ENCODE measurements at regions of chr4 and their contacts with region 1.

Region 1: DNA sequence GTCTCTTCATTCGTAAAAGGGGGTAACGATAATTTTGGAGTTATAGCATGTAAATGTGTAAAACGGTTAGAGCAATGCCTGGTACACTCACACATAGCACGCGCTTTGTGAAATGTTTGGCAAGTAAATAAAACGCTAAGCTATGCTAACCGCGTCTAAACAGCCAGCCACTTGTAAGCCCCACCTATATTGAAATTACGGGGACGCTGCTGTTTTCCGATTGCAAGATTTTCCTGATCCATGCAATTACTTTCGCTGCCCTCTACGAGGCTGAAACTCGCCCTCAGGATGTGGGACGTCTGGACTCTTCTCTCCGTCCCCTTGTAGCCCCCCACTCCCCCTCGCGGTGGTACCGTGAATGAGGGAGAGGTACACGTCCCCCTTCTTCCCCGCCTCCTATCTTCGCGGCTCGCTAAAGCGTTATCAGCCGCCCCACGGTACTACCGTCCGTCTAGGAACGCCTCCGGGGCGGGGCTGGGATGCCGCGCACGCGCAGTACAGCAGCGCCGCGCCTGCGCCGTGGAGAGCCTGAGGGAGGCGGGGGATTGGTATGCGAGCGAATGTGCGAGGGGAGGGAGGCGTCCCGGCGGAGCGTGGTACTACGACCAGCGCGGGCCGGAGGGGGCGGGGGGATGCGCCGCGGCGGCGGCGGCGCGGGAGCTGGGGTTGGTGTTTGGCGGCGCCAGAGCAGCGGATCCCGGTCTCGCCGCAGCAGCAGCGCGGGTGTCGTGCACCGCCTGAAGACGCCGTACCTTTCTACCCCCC is at the start of gene STIM2:
- DNase-seq: peak; percentile 100
- ATAC-seq: peak; percentile 67
- H3K4me3 Mint-ChIP-seq: peak within 1 kb of the TSS; percentile 100
- H3K27ac Mint-ChIP-seq: peak within 1 kb of the TSS; percentile 100
- H3K4me1 Mint-ChIP-seq: peaks cover 63% of the 10 kb centered on the region
- H3K27me3 Mint-ChIP-seq: no peaks in the 10 kb centered on the region
- CTCF ChIP-seq: no peak
- total RNA-seq, gene STIM2: 48.7 and 59.8 TPM in 2 replicates

Region 2: DNA sequence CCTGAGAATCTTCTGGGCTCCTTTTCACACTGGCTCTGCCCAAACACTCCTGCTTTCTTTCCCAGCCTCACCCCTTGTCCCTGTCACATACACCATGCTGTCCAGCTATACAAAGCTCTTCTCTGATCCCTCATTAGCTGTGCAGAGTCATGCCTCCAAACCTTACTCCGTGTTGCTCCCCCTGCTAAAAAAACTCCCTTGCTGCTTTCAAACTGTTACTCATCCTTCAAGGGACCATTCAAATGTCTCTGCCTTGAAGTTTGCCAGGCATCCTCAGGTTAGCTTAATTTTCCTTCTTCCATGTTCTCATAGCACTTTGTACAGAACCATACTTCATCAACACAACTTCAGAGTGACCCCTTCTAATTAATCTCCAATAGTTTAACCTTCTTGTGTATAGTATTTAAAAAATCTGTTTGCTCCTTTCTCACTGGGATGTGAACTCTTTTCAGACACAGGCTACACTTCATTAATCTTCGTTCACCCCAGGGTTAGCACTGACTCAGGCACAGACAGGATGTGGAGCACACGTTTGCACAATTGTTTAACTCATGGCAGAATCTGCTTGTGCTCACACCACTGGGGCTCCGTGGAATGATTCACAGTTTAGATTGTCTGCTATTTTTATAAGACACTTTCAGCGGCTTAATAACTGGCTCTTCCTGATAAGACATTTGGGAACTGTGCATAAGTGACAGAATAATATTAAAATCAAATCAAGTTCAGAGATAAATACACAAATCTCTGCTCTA is 976.1 kb before region 1 on chr4:
- CTCF ChIA-PET with region 1: no interaction called
- POLR2A ChIA-PET with region 1: no interaction called
- intact Hi-C with region 1: loop called (anchors 10 kb)
- DNase-seq: no peak
- ATAC-seq: peak; percentile 57
- H3K4me3 Mint-ChIP-seq: no peak overlapping the region
- H3K27ac Mint-ChIP-seq: peak overlapping the region; percentile 62
- H3K4me1 Mint-ChIP-seq: peaks cover 50% of the 10 kb centered on the region
- H3K27me3 Mint-ChIP-seq: no peaks in the 10 kb centered on the region
- CTCF ChIP-seq: no peak

Region 3: GRCh38 chr4:26299254-26299882 is 561.0 kb before region 1 on chr4:
- CTCF ChIA-PET with region 1: no interaction called
- POLR2A ChIA-PET with region 1: no interaction called
- intact Hi-C with region 1: no loop called
- DNase-seq: no peak
- ATAC-seq: no peak
- H3K4me3 Mint-ChIP-seq: no peak overlapping the region
- H3K27ac Mint-ChIP-seq: no peak overlapping the region
- H3K4me1 Mint-ChIP-seq: no peaks in the 10 kb centered on the region
- H3K27me3 Mint-ChIP-seq: peaks cover under 1% of the 10 kb centered on the region
- CTCF ChIP-seq: no peak

Region 4: DNA sequence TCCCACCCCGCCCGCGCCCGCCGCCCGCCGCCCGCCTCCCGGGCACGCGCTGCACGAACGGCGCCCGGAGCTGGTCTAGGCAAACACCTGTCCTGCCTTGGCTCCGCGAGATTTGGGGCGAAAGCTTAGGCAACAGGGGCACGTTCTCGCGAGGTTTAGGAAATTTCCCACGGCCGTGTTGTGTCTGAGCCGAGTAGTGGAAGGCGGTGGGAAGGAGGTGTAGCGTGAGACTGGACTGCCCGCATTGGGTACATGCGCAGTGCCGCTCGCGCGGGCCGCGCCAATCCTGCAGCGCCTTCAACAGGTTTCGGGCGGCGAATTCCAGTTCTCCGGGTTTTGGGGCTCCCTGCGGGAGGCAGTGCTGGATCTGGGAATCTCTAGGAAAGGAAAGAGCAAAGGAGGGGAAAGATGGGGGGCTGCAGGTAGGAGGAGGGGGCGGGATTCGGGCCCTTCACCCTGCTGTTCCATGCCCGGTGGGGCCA is 540.8 kb before region 1 on chr4:
- CTCF ChIA-PET with region 1: no interaction called
- POLR2A ChIA-PET with region 1: interaction called, 9 read pairs
- intact Hi-C with region 1: loop called (anchors 1 kb)
- DNase-seq: peak; percentile 88
- ATAC-seq: peak; percentile 72
- H3K4me3 Mint-ChIP-seq: peak overlapping the region; percentile 99
- H3K27ac Mint-ChIP-seq: peak overlapping the region; percentile 99
- H3K4me1 Mint-ChIP-seq: peaks cover 35% of the 10 kb centered on the region
- H3K27me3 Mint-ChIP-seq: no peaks in the 10 kb centered on the region
- CTCF ChIP-seq: no peak

Region 5: GRCh38 chr4:26342328-26343037 is 517.9 kb before region 1 on chr4:
- CTCF ChIA-PET with region 1: no interaction called
- POLR2A ChIA-PET with region 1: no interaction called
- intact Hi-C with region 1: no loop called
- DNase-seq: no peak
- ATAC-seq: no peak
- H3K4me3 Mint-ChIP-seq: no peak overlapping the region
- H3K27ac Mint-ChIP-seq: no peak overlapping the region
- H3K4me1 Mint-ChIP-seq: peaks cover 48% of the 10 kb centered on the region
- H3K27me3 Mint-ChIP-seq: no peaks in the 10 kb centered on the region
- CTCF ChIP-seq: no peak

Region 6: GRCh38 chr4:26787461-26788340 is 72.6 kb before region 1 on chr4:
- CTCF ChIA-PET with region 1: interaction called, 5 read pairs
- POLR2A ChIA-PET with region 1: interaction called, 8 read pairs
- intact Hi-C with region 1: loop called (anchors 1 kb)
- DNase-seq: no peak
- ATAC-seq: peak; percentile 63
- H3K4me3 Mint-ChIP-seq: peak overlapping the region; percentile 13
- H3K27ac Mint-ChIP-seq: peak overlapping the region; percentile 32
- H3K4me1 Mint-ChIP-seq: peaks cover 37% of the 10 kb centered on the region
- H3K27me3 Mint-ChIP-seq: peaks cover 2% of the 10 kb centered on the region
- CTCF ChIP-seq: no peak

Region 7: DNA sequence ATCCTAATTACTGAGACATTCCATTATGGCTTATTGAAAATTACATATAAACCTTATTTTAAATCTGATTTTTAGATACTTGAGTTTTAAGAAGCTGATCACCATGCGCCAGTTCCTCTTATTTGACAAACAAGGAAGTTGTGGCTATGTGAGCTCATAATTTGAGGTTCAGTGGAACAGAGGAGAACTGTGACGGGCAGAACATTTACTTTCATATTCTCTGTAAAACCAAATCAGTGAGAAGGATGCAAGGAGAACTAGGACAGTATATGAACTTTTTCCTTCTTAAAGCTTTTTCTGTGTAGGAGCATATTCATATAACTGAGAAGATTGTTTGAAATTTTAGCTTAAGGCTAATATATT is 25.6 kb after region 1 on chr4:
- CTCF ChIA-PET with region 1: interaction called, 10 read pairs
- POLR2A ChIA-PET with region 1: interaction called, 158 read pairs
- intact Hi-C with region 1: loop called (anchors 1 kb)
- DNase-seq: no peak
- ATAC-seq: peak; percentile 67
- H3K4me3 Mint-ChIP-seq: peak overlapping the region; percentile 73
- H3K27ac Mint-ChIP-seq: peak overlapping the region; percentile 95
- H3K4me1 Mint-ChIP-seq: peaks cover 90% of the 10 kb centered on the region
- H3K27me3 Mint-ChIP-seq: no peaks in the 10 kb centered on the region
- CTCF ChIP-seq: no peak

Region 8: GRCh38 chr4:26992657-26993361 is 132.5 kb after region 1 on chr4:
- CTCF ChIA-PET with region 1: interaction called, 6 read pairs
- POLR2A ChIA-PET with region 1: interaction called, 57 read pairs
- intact Hi-C with region 1: loop called (anchors 1 kb)
- DNase-seq: peak; percentile 26
- ATAC-seq: peak; percentile 80
- H3K4me3 Mint-ChIP-seq: no peak overlapping the region
- H3K27ac Mint-ChIP-seq: no peak overlapping the region
- H3K4me1 Mint-ChIP-seq: peaks cover 17% of the 10 kb centered on the region
- H3K27me3 Mint-ChIP-seq: no peaks in the 10 kb centered on the region
- CTCF ChIP-seq: no peak

Measured in activated B cell treated with CpG ODN at 0.5 μM for 24 hours (primary cell).